Head of caudate nucleus (tissue), 42 donors: ENCODE measurements at regions of chr2 and their contacts with region 1.

Region 1: DNA sequence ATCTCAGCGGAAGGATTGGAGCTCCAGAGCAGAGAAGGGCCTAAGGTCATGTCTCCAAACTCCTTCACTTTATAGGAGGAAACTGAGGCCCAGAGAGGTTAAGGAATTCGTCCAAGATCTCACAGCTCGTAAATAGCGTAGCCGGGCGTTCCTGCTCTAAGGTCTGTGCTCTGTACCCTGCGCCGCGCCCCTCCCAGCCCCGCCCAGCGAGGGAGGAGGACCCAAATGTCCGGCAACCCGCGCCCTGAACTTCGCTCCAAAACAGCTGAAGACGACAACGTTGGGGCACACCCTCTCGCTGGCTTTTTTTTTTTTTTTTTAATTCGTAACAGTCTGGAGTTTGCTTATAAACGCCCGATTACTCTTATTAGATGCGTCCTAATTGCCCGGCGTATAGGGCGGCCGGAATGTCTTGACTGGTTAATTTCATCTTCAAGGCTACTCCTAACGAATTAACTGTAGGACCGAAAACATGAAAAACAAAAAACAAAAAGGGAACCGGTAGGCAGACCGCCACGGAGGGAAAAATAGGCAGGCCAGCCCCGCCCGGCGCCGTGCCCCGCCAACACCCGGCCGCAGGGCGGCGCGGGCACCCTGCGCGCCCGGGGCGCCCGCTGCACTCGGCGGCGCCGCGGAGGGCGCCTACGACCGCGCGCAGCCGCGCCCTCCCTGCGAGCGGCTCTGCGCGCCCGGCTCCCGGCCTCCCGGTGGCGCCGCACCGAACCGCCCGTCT is 928 bp upstream of the FOSL2 start:
- DNase-seq: peak in 35 of 42 donors; percentile 10 to 80 (median 49)

Region 2: DNA sequence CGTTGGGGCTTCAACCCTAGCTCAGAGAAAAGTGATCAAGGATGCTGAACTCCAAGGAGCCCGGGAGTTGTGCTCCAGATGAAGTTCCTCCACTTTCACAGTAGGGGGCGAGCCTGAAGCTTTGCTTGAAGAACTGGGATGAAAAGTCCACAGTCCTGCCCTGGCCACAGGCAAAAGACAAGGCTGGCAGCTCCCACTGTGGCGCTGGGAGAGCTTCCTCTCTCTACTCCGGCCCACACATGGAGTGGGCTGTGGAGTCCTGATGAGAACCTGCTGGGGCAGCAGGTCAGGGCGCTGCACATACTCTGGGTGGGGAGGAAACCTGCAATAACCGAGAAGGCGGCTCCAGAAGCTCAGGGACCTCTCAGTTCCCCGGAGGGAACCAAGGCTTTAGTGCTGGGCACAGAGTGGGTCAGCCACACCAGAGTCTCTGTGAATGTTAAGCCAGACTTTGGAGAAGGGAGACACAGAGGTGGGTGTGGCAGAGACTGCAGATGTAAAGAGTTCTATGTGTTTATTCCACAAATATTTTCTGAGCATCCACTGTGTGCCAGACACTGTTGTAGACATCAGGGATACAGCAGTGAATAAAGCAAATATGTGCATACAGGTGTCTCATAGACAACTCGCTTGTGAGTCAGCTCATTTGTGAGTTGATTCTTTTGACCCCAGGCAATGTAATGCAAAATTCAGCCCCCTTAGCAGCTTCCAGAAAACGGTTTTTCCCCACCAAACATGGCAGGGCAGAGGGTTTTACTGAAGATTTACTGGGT is 668.2 kb before region 1 on chr2:
- intact Hi-C with region 1: loop called (anchors 5 kb)
- DNase-seq: peak; percentile 42 to 91 (median 75)

Region 3: DNA sequence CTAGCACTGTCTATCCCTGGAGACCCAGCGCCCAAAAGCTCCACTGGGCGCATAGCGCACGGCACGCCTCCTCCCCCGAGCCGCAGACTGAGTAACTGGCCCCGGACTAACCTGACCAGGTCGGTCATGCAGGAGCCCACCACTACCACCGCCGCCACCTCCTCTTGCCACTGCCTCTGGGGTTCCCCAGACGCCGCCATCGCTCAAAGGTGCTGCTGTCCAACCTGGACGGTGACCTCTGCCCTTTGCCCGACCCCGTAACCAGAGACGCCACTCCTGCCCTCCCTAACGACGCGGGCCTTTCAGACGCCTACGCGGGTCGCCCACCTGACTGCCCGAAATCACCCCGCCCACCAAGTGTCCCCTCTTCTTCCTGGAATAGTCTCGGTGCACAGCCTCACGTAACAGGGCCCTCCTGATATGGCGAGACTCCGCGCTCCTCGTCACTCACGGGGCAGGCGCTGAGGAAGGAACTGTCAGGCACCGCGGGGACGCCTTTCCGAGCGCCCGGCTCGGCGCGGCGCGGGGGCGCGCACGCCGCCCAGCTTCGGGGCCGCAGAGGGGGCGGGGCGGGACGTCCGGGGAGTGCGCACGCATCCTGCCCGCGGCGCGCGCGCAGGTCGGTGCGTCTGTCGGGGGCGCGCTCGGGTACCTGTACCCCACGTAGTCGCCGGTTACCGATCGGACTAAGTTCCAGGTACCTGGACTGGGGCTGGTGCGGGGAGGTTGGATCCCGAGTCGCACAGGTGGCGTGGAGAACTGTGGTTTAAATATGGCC is 501.4 kb before region 1 on chr2 and contains the starts of genes BABAM2 and RBKS:
- intact Hi-C with region 1: loop called (anchors 2 kb)
- DNase-seq: peak; percentile 61 to 91 (median 83)

Region 4: GRCh38 chr2:28224648-28225472 is 166.9 kb before region 1 on chr2:
- intact Hi-C with region 1: no loop called
- DNase-seq: peak in 26 of 42 donors; percentile 3 to 47 (median 20)

Region 5: DNA sequence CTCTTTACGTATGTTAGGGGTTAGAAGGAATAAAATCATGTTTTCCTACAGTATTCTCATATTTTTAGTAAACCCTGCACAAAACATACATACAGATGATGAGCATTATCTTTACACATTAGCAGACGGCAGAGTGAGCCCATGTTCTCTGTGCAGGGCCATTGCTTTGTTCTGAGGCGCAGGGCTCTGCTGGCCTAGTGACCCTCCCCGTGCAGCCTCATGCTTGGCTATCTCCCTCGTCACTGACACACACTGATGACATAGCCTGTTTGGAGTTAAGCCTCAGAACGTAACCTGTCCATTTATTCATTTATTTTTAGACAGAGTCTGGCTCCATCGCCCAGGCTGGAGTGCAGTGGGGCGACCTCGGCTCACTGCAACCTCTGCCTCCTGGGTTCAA is 114.9 kb before region 1 on chr2:
- intact Hi-C with region 1: no loop called
- DNase-seq: no peak

Region 6: GRCh38 chr2:28325567-28326468 is 65.9 kb before region 1 on chr2:
- intact Hi-C with region 1: no loop called
- DNase-seq: peak in 2 of 42 donors; percentile 21